Panc1 (cell line): ENCODE measurements at regions of chr4 and their contacts with region 1.

Region 1: DNA sequence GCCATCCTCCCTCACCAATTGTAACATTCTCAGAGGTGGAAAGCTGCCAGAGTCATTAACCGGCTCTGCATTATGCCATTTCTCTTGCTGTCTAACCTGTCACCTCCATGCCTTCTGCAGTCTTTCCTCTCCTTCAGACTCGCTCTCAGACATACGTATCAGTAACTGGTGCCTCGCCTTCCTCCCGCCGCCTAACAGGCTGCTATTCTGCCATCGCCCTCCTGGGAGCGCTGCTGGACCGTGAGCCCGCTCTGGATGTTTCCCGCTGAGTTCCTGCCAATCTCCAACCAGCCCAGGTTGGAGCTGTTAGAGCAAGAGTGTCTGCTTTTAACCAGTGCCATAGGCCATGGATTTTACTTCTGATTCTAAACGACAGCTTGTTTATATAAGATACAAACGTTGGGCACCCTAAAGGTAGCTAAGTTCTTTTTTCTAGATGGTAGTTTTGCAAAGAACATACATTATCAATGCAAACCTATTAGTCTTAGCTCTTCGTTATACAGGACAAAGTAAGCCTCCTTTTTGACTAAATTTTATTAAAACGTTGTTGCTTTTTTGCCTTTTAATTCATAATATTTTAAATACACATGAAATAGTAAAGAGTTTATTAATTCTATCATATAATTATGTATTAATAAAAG is 59.5 kb upstream of the NEIL3 start:
- DNase-seq: peak; percentile 36
- ATAC-seq: peak; percentile 93
- H3K4me3 ChIP-seq: no peak overlapping the region; a peak in 1 of 4 replicates
- H3K27ac ChIP-seq: no peak overlapping the region
- H3K4me1 ChIP-seq: no peaks in the 10 kb centered on the region
- H3K27me3 ChIP-seq: no peaks in the 10 kb centered on the region
- CTCF ChIP-seq: peak; percentile 94

Region 2: GRCh38 chr4:177079327-177079726 is 170.8 kb before region 1 on chr4:
- CTCF ChIA-PET with region 1: no interaction called
- POLR2A ChIA-PET with region 1: no interaction called
- in situ Hi-C with region 1: no loop called
- intact Hi-C with region 1: no loop called
- DNase-seq: no peak
- ATAC-seq: no peak
- H3K4me3 ChIP-seq: no peak overlapping the region
- H3K27ac ChIP-seq: no peak overlapping the region
- H3K4me1 ChIP-seq: no peaks in the 10 kb centered on the region
- H3K27me3 ChIP-seq: no peaks in the 10 kb centered on the region
- CTCF ChIP-seq: no peak

Region 3: DNA sequence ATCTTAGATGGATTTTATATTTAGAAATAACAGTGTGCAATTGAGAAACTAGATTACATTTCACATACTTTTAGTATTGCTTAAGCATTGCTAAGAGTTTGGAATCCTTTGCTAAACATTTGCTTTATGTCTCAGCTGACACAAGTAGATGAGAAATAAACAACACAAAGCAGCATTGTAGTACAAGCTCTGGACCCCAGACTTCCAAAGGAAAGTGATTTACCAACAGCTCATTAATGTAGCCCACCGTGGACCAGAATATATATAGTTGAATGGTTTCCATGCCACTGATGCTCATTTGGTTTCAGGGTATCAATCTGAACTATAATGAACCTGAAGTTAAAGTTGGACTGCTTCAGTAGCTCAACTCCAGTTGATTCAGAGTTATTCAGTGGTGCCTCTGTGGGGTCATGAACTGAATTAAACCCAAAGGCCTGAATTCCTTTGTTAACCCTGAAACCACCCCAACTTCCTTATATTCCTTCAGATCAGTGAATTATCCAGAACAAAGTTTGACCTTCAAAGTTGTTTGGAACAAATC is 72.6 kb before region 1 on chr4:
- CTCF ChIA-PET with region 1: no interaction called
- POLR2A ChIA-PET with region 1: no interaction called
- in situ Hi-C with region 1: no loop called
- intact Hi-C with region 1: no loop called
- DNase-seq: no peak
- ATAC-seq: no peak
- H3K4me3 ChIP-seq: no peak overlapping the region
- H3K27ac ChIP-seq: no peak overlapping the region
- H3K4me1 ChIP-seq: no peaks in the 10 kb centered on the region
- H3K27me3 ChIP-seq: no peaks in the 10 kb centered on the region
- CTCF ChIP-seq: no peak

Region 4: DNA sequence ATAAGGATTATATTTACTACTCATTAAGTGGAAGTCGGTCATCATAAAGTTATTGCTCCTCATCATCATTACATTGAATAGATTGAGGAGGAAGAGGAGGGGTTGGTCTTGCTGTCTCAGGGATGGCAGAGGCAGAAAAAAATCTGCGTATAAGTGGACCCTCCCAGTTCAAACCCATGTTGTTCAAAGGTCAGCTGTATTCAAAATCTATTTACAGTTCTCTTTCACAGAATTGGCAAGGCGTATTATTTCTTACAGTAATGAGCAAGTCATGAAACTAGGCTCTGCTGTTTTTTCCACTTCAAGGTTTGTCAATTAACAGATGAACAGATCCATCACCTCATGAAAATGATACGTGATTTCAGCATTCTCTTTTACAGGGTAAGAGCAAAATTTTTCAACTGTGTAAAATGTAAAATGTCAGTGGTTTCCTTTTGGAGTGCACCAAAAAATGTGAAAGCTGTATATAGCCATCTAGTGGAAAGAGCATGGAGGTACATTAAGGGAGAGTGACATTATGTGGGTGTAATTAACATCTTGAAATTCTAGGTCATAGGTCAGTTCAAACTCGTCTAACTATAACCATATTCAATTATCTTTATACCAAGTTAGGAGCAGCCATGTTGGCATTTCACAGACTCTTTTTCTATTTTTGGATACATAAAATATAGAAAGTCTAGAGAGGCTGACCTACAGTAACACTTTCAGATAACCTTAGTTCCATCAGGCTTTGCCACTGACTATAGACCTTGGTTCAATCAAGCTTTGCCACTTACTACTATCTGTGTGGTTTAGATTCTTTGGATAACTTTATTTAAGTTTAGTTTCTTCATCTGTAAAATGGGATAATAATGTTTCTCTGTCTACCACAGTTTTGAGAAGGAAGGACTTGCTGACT is 89.5 kb after region 1 on chr4:
- CTCF ChIA-PET with region 1: interaction called, 4 read pairs
- POLR2A ChIA-PET with region 1: no interaction called
- in situ Hi-C with region 1: no loop called
- intact Hi-C with region 1: loop called (anchors 5 kb)
- DNase-seq: no peak
- ATAC-seq: peak; percentile 81
- H3K4me3 ChIP-seq: no peak overlapping the region
- H3K27ac ChIP-seq: no peak overlapping the region
- H3K4me1 ChIP-seq: no peaks in the 10 kb centered on the region
- H3K27me3 ChIP-seq: no peaks in the 10 kb centered on the region
- CTCF ChIP-seq: peak; percentile 59; the same call in 1 of the 2 replicates

Region 5: DNA sequence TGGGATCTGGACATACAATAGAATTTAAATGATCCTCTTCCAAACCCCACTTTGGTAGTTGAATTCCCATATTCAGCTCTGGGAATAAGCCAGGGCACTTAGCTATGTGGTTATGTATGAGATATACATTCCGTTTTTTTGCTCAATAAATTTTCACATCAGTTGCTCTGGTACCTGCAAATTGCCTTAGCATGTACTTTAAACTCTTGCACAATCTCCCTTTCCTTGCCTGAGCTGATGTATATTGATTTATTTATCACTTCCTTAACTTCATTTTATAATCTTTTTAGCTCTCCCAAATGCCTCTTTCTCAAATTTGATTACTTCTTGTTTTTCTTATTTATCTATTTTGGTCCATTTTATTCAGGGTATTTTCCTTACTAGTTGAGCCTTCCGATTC is 282.2 kb after region 1 on chr4:
- CTCF ChIA-PET with region 1: no interaction called
- POLR2A ChIA-PET with region 1: no interaction called
- in situ Hi-C with region 1: no loop called
- intact Hi-C with region 1: loop called (anchors 10 kb)
- DNase-seq: no peak
- ATAC-seq: no peak
- H3K4me3 ChIP-seq: no peak overlapping the region
- H3K27ac ChIP-seq: no peak overlapping the region
- H3K4me1 ChIP-seq: no peaks in the 10 kb centered on the region
- H3K27me3 ChIP-seq: no peaks in the 10 kb centered on the region
- CTCF ChIP-seq: no peak